ENCODE measurements at regions of chr22 and their contacts with region 1.

Region 1: DNA sequence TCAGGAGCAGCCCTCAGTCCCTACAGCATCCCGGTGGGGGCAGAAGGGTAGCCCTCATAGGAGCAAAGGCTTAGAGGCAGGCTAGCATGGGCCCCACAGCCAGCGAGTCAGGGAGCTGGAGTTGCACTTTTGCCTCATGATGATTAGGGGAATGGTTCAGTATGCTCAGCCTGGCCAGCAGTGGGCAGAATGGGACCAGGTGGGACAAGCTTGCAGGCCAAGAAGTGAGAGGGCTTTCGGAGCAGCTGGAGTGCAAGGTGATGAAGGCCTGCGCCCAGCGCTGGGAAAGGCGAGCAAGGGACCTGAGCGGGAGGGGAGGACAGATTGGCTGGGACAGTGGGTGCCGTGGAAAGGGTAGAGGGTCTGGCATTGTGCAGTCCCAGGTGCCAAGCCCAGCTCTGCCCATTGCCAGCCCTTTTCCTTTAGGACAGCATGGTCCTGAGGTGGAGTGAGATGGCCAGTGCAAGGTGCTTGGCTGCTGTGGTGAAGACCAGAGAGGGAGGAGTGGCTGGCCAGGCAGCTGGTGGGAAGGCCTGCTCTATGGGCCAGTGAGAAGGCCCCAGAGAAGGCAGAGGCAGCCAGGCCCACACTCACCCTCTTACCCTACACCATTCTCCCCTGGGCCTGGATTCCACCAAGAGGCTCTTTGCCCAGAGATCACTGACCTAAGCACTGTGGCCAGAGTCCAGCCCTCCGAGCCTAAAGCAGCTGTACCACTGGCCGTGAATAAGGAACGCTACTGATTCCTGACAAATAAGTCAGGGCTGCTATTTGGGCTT is 47.9 kb upstream of the SUSD2 start:
- DNase-seq: peak in 30 of 35 experiments; percentile 15 to 67 (median 42)
- ATAC-seq: peak; percentile 54 to 73 (median 58)
- H3K4me3 ChIP-seq: no peak overlapping the region
- H3K4me3 Mint-ChIP-seq: peak overlapping the region in 1 of 3 donors; percentile 60
- H3K27ac ChIP-seq: no peak overlapping the region
- H3K27ac Mint-ChIP-seq: peak overlapping the region; percentile 86 to 87
- H3K4me1 ChIP-seq: peaks cover 9 to 29% of the 10 kb centered on the region in 2 experiments
- H3K4me1 Mint-ChIP-seq: peaks cover 30 to 33% (median 30%) of the 10 kb centered on the region in 3 donors
- H3K27me3 ChIP-seq: no peaks in the 10 kb centered on the region
- H3K27me3 Mint-ChIP-seq: no peaks in the 10 kb centered on the region

Region 2: DNA sequence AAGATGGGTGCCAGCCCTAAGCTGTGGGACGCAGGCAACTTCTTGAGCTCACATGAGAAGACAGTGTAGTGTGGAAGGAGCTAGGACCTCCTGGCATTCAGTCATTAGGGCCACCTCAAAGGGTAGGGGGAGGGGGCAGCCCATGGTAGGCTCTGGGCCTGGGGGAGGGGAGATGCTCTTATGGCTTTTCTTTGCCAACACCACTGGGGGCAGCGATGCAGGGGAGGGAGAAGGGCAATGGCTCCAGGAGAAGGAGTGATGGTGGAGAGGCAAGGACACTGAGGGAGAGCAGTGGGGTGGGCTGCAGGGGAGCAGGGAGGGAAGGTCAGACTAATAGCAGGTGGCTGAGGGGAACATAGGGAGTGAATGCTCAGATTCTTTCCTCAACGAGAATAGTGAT is 15.4 kb before region 1 on chr22:
- CTCF ChIA-PET with region 1: no interaction called
- POLR2A ChIA-PET with region 1: no interaction called
- DNase-seq: no peak
- ATAC-seq: no peak
- H3K4me3 ChIP-seq: no peak overlapping the region
- H3K4me3 Mint-ChIP-seq: no peak overlapping the region
- H3K27ac ChIP-seq: no peak overlapping the region
- H3K27ac Mint-ChIP-seq: no peak overlapping the region
- H3K4me1 ChIP-seq: no peaks in the 10 kb centered on the region
- H3K4me1 Mint-ChIP-seq: no peaks in the 10 kb centered on the region
- H3K27me3 ChIP-seq: no peaks in the 10 kb centered on the region
- H3K27me3 Mint-ChIP-seq: no peaks in the 10 kb centered on the region

Region 3: DNA sequence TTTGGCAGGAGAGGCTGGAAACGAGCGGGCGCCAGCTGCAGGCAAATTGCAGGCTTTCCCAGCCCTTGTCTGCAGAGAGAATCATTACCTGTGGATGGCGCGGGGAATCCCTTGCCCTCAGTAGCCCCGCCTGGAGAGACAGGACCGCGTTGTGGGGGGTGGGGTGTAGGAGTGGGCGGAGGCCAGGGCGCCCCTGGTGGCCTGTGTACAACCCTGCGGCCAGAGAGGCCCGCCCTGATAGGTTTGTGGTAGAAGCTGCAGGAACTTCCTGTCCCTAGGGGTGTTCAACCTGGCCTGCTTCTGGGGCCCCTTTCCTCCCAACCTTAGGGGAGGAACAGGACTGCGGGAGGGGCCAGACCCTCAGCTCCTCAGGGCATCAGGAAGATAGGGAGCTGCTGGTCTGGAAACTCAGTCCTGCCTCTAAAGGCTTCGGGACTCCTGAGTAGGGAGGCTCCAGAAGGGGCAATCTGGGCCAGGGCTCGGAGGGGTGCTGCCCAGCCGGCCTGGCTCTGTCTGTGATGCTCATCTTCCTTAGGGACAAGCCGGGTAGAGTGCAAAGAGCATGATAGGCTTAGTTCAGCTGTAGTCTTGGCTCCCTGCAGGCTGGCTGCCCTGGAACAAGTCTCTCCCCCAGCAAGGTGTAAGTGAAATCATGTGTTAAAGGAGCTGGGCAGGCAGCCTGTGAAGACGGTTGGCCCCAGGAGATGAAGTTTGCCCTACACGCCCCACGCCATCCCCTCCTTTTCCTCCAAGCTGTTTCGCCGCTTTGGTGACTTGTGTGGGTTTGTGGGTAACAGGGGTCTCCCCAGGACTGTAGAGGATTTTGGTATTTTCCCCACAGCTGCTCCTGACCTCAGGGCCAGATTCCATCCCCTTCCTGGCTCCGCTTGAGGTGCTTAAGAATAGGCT is 23.8 kb after region 1 on chr22:
- CTCF ChIA-PET with region 1: interaction called, 8 to 12 read pairs
- POLR2A ChIA-PET with region 1: no interaction called
- DNase-seq: peak; percentile 80 to 93 (median 86)
- ATAC-seq: peak; percentile 70 to 82 (median 73)
- H3K4me3 ChIP-seq: peak overlapping the region; percentile 84 to 97
- H3K4me3 Mint-ChIP-seq: peak overlapping the region; percentile 89 to 92 (median 90)
- H3K27ac ChIP-seq: peak overlapping the region; percentile 68
- H3K27ac Mint-ChIP-seq: peak overlapping the region; percentile 91
- H3K4me1 ChIP-seq: peaks cover 40 to 91% of the 10 kb centered on the region in 2 experiments
- H3K4me1 Mint-ChIP-seq: peaks cover 74 to 90% (median 78%) of the 10 kb centered on the region in 3 donors
- H3K27me3 ChIP-seq: no peaks in the 10 kb centered on the region
- H3K27me3 Mint-ChIP-seq: no peaks in the 10 kb centered on the region

Region 4: DNA sequence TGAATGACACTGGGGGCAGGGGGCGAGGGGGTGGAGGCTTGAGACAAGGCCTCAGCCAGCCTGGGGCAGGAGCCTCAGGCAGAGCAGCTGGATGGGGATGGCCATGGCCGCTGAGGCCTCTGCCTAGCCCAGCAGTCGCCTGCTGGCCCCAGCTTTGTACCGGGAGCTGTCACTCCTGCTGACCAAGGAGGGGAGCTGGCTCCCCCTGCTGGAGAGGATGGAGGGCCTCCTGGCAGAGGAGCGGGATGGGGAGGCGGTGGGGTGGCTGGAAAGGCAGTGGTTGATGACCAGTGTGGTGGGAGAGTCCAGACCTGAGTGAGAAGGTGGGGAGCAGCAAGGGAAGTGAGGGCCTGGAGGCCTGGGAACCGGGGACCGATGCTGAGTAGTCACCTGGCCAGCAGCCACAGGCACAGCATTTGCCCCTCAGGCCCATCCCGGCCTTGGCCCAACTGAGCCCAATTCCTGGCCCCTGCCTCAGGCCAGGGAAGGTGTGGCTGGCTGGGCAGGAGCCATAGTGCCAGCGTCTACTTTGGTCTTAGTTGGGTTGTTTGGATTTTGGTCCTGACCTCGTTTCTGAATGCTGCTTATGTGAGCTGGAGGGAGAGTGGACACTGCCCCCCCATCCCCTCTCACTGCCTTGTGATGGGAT is 41.9 kb after region 1 on chr22:
- CTCF ChIA-PET with region 1: interaction called, 4 to 12 read pairs
- POLR2A ChIA-PET with region 1: no interaction called
- DNase-seq: peak in 34 of 35 experiments; percentile 26 to 73 (median 51)
- ATAC-seq: peak; percentile 42 to 65 (median 62)
- H3K4me3 ChIP-seq: no peak overlapping the region
- H3K4me3 Mint-ChIP-seq: no peak overlapping the region
- H3K27ac ChIP-seq: no peak overlapping the region
- H3K27ac Mint-ChIP-seq: peak overlapping the region; percentile 28 to 49
- H3K4me1 ChIP-seq: peaks cover 0 to 11% of the 10 kb centered on the region in 2 experiments
- H3K4me1 Mint-ChIP-seq: no peaks in the 10 kb centered on the region
- H3K27me3 ChIP-seq: no peaks in the 10 kb centered on the region
- H3K27me3 Mint-ChIP-seq: no peaks in the 10 kb centered on the region

Region 5: GRCh38 chr22:24208012-24208749 is 74.8 kb after region 1 on chr22:
- CTCF ChIA-PET with region 1: no interaction called
- POLR2A ChIA-PET with region 1: no interaction called
- DNase-seq: peak in 1 of 35 experiments; percentile 21
- ATAC-seq: peak in 1 of 4 experiments; percentile 44
- H3K4me3 ChIP-seq: no peak overlapping the region
- H3K4me3 Mint-ChIP-seq: peak overlapping the region in 1 of 3 donors; percentile 20
- H3K27ac ChIP-seq: no peak overlapping the region
- H3K27ac Mint-ChIP-seq: peak overlapping the region; percentile 66 to 77
- H3K4me1 ChIP-seq: peaks cover 3 to 16% of the 10 kb centered on the region in 2 experiments
- H3K4me1 Mint-ChIP-seq: peaks cover 15 to 22% (median 17%) of the 10 kb centered on the region in 3 donors
- H3K27me3 ChIP-seq: peaks cover 0 to 2% of the 10 kb centered on the region in 2 experiments
- H3K27me3 Mint-ChIP-seq: no peaks in the 10 kb centered on the region

Measured in T-cell (primary cell).